PC-3 (cell line): ENCODE measurements at regions of chr11 and their contacts with region 1.

Region 1: GRCh38 chr11:76680518-76681425 is 10.2 kb upstream of the LRRC32 start:
- DNase-seq: peak; percentile 81
- ATAC-seq: peak; percentile 88
- H3K4me3 ChIP-seq: no peak overlapping the region
- H3K27ac ChIP-seq: no peak overlapping the region
- H3K4me1 ChIP-seq: no peaks in the 10 kb centered on the region
- H3K27me3 ChIP-seq: no peaks in the 10 kb centered on the region
- CTCF ChIP-seq: peak; percentile 97

Region 2: GRCh38 chr11:76207642-76208401 is 472.9 kb before region 1 on chr11:
- CTCF ChIA-PET with region 1: no interaction called
- POLR2A ChIA-PET with region 1: no interaction called
- intact Hi-C with region 1: loop called (anchors 2 kb)
- DNase-seq: peak; percentile 93
- ATAC-seq: peak; percentile 56
- H3K4me3 ChIP-seq: peak overlapping the region; percentile 67
- H3K27ac ChIP-seq: no peak overlapping the region
- H3K4me1 ChIP-seq: peaks cover 32% of the 10 kb centered on the region
- H3K27me3 ChIP-seq: peaks cover 49% of the 10 kb centered on the region
- CTCF ChIP-seq: peak; percentile 94

Region 3: GRCh38 chr11:76551400-76551799 is 129.4 kb before region 1 on chr11:
- CTCF ChIA-PET with region 1: interaction called, 3 read pairs
- POLR2A ChIA-PET with region 1: no interaction called
- intact Hi-C with region 1: loop called (anchors 2 kb)
- DNase-seq: peak; percentile 23
- ATAC-seq: no peak
- H3K4me3 ChIP-seq: no peak overlapping the region
- H3K27ac ChIP-seq: no peak overlapping the region
- H3K4me1 ChIP-seq: no peaks in the 10 kb centered on the region
- H3K27me3 ChIP-seq: no peaks in the 10 kb centered on the region
- CTCF ChIP-seq: peak; percentile 56